ENCODE measurements at regions of chr21 and their contacts with region 1.

Region 1: GRCh38 chr21:41283211-41283818 is 33.3 kb upstream of the FAM3B start:
- DNase-seq: peak; percentile 69
- H3K4me3 ChIP-seq: no peak overlapping the region
- H3K27ac ChIP-seq: no peak overlapping the region
- H3K4me1 ChIP-seq: no peaks in the 10 kb centered on the region
- H3K27me3 ChIP-seq: no peaks in the 10 kb centered on the region
- CTCF ChIP-seq: peak; percentile 82 to 83

Region 2: GRCh38 chr21:41196636-41197389 is 86.5 kb before region 1 on chr21:
- CTCF ChIA-PET with region 1: no interaction called
- dilution Hi-C with region 1: no loop called
- in situ Hi-C with region 1: no loop called
- intact Hi-C with region 1: no loop called
- DNase-seq: peak; percentile 29
- H3K4me3 ChIP-seq: no peak overlapping the region
- H3K27ac ChIP-seq: no peak overlapping the region
- H3K4me1 ChIP-seq: peaks cover 6% of the 10 kb centered on the region
- H3K27me3 ChIP-seq: no peaks in the 10 kb centered on the region
- CTCF ChIP-seq: no peak

Region 3: GRCh38 chr21:41360072-41360821 is 76.9 kb after region 1 on chr21:
- CTCF ChIA-PET with region 1: interaction called, 6 read pairs
- dilution Hi-C with region 1: no loop called
- in situ Hi-C with region 1: no loop called
- intact Hi-C with region 1: loop called (anchors 1 kb)
- DNase-seq: peak; percentile 21
- H3K4me3 ChIP-seq: no peak overlapping the region
- H3K27ac ChIP-seq: no peak overlapping the region
- H3K4me1 ChIP-seq: no peaks in the 10 kb centered on the region
- H3K27me3 ChIP-seq: peaks cover 5% of the 10 kb centered on the region
- CTCF ChIP-seq: peak in 1 of 2 donors; percentile 35

Region 4: GRCh38 chr21:41460578-41461527 is 177.5 kb after region 1 on chr21:
- CTCF ChIA-PET with region 1: interaction called, 8 read pairs
- dilution Hi-C with region 1: no loop called
- in situ Hi-C with region 1: loop called (anchors 10 kb)
- intact Hi-C with region 1: loop called (anchors 1 kb)
- DNase-seq: peak; percentile 36
- H3K4me3 ChIP-seq: no peak overlapping the region
- H3K27ac ChIP-seq: no peak overlapping the region
- H3K4me1 ChIP-seq: no peaks in the 10 kb centered on the region
- H3K27me3 ChIP-seq: no peaks in the 10 kb centered on the region
- CTCF ChIP-seq: peak; percentile 79 to 94

Region 5: GRCh38 chr21:41777951-41778874 is 494.9 kb after region 1 on chr21:
- CTCF ChIA-PET with region 1: interaction called, 6 read pairs
- dilution Hi-C with region 1: no loop called
- in situ Hi-C with region 1: loop called in 1 of 2 experiments (anchors 25 kb)
- intact Hi-C with region 1: loop called (anchors 5 kb)
- DNase-seq: peak; percentile 86
- H3K4me3 ChIP-seq: no peak overlapping the region
- H3K27ac ChIP-seq: peak overlapping the region; percentile 56
- H3K4me1 ChIP-seq: peaks cover 25% of the 10 kb centered on the region
- H3K27me3 ChIP-seq: no peaks in the 10 kb centered on the region
- CTCF ChIP-seq: peak; percentile 94

Measured in mammary epithelial cell (primary cell).